ENCODE measurements at regions of chr14 and their contacts with region 1.

Region 1: GRCh38 chr14:102139248-102140026 is at the start of gene WDR20:
- DNase-seq: peak; percentile 100
- H3K4me3 Mint-ChIP-seq: peak within 1 kb of the TSS; percentile 98
- H3K27ac Mint-ChIP-seq: peak within 1 kb of the TSS; percentile 94
- H3K4me1 Mint-ChIP-seq: peaks cover 20% of the 10 kb centered on the region
- H3K27me3 Mint-ChIP-seq: no peaks in the 10 kb centered on the region
- total RNA-seq, gene WDR20: 22.2 to 25.3 TPM

Region 2: GRCh38 chr14:101721951-101722661 is 417.3 kb before region 1 on chr14:
- CTCF ChIA-PET with region 1: no interaction called
- POLR2A ChIA-PET with region 1: no interaction called
- intact Hi-C with region 1: loop called (anchors 5 kb)
- DNase-seq: peak; percentile 86
- H3K4me3 Mint-ChIP-seq: peak overlapping the region; percentile 77
- H3K27ac Mint-ChIP-seq: peak overlapping the region; percentile 99
- H3K4me1 Mint-ChIP-seq: peaks cover 45% of the 10 kb centered on the region
- H3K27me3 Mint-ChIP-seq: no peaks in the 10 kb centered on the region

Region 3: DNA sequence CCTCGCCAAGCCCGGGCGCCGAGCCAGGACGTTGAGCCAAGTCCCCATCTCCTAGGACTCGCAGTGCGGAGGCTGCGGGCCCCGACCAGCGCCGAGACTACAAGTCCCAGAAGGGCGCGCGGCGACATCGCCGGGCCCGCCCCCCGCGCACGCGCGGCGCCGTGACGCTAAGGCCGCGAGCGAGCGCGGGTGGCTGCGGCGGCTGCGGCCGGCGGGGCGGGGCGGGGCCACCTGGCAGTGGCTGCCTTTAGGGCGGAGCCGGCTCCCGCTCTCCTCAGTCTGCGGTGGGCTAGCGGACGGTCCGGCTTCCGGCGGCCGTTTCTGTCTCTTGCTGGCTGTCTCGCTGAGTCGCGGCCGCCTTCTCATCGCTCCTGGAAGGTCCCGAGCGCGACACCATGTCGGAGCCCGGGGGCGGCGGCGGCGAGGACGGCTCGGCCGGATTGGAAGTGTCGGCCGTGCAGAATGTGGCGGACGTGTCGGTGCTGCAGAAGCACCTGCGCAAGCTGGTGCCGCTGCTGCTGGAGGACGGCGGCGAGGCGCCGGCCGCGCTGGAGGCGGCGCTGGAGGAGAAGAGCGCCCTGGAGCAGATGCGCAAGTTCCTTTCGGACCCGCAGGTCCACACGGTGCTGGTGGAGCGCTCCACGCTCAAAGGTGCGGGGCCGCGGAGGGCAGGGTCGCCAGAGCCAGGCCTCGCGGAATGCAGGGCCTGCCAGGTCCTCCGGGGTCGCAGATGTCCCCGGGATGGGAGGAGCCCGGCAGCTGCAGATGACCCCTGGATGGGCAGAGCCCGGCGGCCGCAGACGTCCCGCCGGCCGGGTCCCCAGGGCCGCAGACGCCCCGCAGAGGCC is 174.9 kb before region 1 on chr14 and contains the start of gene DYNC1H1:
- CTCF ChIA-PET with region 1: interaction called, 6 read pairs
- POLR2A ChIA-PET with region 1: interaction called, 4 read pairs
- intact Hi-C with region 1: loop called (anchors 2 kb)
- DNase-seq: peak; percentile 91
- H3K4me3 Mint-ChIP-seq: peak within 1 kb of the TSS; percentile 88
- H3K27ac Mint-ChIP-seq: peak within 1 kb of the TSS; percentile 84
- H3K4me1 Mint-ChIP-seq: peaks cover 35% of the 10 kb centered on the region
- H3K27me3 Mint-ChIP-seq: no peaks in the 10 kb centered on the region
- total RNA-seq, gene DYNC1H1: 242 to 245 TPM

Region 4: DNA sequence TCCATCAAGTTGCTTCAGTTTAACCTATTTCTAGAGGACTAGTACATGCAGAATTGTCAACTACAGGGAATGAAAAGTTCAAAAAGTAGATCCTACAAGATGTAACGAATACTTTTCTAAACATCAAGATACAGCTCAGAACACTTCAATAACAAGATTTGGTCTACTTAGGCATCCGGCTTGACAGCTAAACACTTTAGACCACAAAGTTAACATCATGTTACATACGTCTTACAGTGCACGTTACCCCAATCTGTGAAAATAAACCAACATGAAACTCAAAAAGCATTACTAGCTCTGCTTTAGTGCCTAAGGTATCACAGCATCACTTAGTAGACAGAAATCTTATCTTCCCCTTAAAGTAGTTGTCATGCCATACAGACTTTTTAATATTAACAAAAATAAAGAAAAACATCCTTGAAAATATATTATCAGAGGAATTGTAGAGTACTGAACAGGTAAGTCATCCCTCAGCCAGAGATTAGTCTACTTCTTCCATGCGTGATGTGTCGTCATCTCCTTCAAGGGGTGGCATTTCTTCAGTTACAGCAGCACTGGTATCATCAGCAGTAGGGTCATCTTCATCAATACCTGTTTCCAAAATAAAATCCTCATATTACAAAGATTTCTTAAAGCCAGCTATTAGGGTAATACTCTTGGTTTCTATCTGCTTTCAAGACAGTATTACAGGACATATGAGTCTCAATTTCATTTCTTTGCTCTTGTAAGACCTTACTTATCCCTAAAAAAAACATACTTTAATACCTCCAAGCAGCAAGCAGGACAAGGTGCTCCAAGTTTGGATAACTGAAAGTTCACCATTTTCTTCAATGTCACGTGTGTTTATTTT is 58.0 kb before region 1 on chr14:
- CTCF ChIA-PET with region 1: no interaction called
- POLR2A ChIA-PET with region 1: no interaction called
- intact Hi-C with region 1: no loop called
- DNase-seq: no peak
- H3K4me3 Mint-ChIP-seq: peak overlapping the region; percentile 77
- H3K27ac Mint-ChIP-seq: peak overlapping the region; percentile 68
- H3K4me1 Mint-ChIP-seq: peaks cover 51% of the 10 kb centered on the region
- H3K27me3 Mint-ChIP-seq: no peaks in the 10 kb centered on the region

Region 5: GRCh38 chr14:102187058-102187457 is 47.6 kb after region 1 on chr14:
- CTCF ChIA-PET with region 1: no interaction called
- POLR2A ChIA-PET with region 1: interaction called, 7 read pairs
- intact Hi-C with region 1: loop called (anchors 1 kb)
- DNase-seq: no peak
- H3K4me3 Mint-ChIP-seq: no peak overlapping the region
- H3K27ac Mint-ChIP-seq: peak overlapping the region; percentile 69
- H3K4me1 Mint-ChIP-seq: peaks cover 62% of the 10 kb centered on the region
- H3K27me3 Mint-ChIP-seq: no peaks in the 10 kb centered on the region

Region 6: DNA sequence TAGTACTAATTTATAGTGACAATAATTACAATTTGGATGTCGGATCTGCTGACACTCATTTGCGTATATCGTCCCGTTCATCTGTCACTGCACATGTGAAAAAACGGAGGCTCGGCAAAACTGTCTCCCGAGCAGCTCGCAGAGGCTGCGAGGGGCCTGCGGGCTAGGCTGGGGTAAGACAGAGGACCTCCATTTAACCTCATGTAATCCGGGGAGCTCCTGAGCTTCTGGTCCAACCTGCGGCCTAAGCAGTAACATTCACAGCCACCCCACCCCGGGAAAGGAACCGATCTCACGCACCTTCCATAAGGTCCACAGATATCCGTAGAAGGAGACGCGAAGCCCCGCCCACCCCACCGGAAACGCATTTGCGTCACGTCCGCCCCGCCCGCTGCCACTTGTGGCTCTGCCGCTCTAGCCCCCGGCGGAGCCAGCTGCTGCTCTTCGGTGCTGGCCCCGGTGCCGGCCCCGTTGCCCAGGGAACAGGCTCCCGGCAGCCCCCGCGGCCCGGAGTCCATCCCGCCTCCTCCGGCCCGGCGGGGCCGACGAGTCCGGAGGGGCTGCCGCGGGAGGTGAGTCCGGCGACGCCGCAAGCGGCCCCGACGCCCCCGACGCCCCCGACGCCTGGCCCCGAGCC is 223.2 kb after region 1 on chr14 and contains the starts of genes CINP and TECPR2:
- CTCF ChIA-PET with region 1: no interaction called
- POLR2A ChIA-PET with region 1: no interaction called
- intact Hi-C with region 1: loop called (anchors 1 kb)
- DNase-seq: peak; percentile 99
- H3K4me3 Mint-ChIP-seq: no peak within 1 kb of the TSS
- H3K27ac Mint-ChIP-seq: peak within 1 kb of the TSS; percentile 96
- H3K4me1 Mint-ChIP-seq: peaks cover 31% of the 10 kb centered on the region
- H3K27me3 Mint-ChIP-seq: no peaks in the 10 kb centered on the region
- total RNA-seq, gene CINP: 50.5 to 51.2 TPM
- total RNA-seq, gene TECPR2: 6.2 to 7.0 TPM